ENCODE measurements at regions of chr13 and their contacts with region 1.

Region 1: DNA sequence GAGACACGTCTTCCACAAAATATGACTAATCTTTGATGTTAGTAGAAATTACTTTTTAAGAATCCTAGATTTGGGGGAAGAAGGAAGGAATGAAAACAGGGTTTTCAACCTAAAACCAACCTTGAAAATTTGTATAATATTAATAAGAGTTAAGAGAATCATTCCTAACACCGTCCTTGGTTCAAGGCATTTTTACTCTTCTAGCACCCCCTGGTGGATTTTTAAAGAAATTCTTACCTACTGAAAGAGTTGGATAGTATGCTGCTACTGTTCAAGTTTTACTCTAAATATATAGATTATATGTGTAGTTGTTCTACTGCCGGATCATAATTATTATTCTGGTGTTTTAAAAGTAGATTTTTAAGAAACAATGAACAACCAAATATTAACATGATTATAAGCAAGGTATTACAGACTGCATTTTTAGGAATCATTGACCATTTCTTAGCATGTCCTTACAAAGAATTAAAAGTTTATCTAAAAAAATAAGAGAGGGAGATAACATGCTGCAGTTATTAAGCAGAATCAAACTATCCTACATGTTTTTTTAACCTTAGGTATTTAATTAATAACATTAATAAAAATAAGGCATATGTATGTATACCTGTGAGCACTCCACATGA is 7.4 kb upstream of the SLITRK6 start:
- DNase-seq: no peak
- H3K4me3 Mint-ChIP-seq: no peak overlapping the region
- H3K27ac Mint-ChIP-seq: no peak overlapping the region
- H3K4me1 Mint-ChIP-seq: no peaks in the 10 kb centered on the region
- H3K27me3 Mint-ChIP-seq: no peaks in the 10 kb centered on the region

Region 2: DNA sequence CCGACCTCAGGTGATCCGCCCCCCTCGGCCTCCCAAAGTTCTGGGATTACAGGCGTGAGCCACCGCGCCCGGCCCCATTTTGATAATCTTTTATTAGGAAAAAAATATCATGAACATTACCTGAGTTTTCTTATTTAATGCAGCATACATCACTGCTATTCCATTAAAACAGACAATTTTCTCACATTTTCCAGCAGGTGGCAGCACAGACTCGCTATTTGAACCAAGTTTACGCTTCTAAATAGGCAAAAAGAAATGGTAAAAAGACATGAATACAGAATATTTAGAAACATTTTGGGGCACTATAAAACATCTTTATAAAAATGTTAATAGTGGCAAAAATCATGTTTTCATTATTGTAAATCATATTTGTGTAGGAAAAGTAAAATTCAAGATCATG is 910.5 kb before region 1 on chr13:
- intact Hi-C with region 1: loop called (anchors 1 kb)
- DNase-seq: no peak
- H3K4me3 Mint-ChIP-seq: no peak overlapping the region
- H3K27ac Mint-ChIP-seq: no peak overlapping the region
- H3K4me1 Mint-ChIP-seq: no peaks in the 10 kb centered on the region
- H3K27me3 Mint-ChIP-seq: no peaks in the 10 kb centered on the region

Region 3: DNA sequence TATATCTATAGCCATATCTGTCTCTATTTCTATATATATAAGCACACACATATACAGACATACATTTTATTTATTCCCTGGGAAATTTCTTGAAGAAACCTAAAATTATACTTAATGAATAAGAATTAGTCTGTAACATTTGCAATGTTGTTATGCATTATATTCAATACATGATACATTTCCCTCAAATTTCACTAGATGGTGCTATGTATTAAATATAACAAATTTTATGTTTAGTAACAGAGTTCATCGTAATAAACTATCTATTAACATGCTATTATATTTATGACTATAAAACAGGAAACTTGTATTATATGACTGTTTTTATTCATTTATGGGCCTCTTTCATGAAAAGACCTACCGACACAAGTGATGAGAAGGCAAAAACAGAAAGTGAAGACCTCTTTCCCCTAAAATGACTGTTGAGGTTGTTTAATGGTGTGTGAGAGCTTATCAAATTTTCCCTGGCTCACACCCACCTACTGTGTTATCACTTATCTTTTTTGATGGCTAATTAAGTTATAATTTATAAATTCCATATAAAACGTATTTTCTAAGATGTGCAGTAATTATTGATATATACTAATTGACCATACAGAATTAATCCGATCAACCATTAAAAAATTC is 889.3 kb before region 1 on chr13:
- intact Hi-C with region 1: loop called (anchors 1 kb)
- DNase-seq: no peak
- H3K4me3 Mint-ChIP-seq: no peak overlapping the region
- H3K27ac Mint-ChIP-seq: no peak overlapping the region
- H3K4me1 Mint-ChIP-seq: no peaks in the 10 kb centered on the region
- H3K27me3 Mint-ChIP-seq: no peaks in the 10 kb centered on the region

Measured in activated T-helper 1 cell treated with anti-CD3 and anti-CD28 coated beads, Interleukin-12 subunit alpha, Interleukin-12 subunit beta, Interleukin-2, Interleukin-4 antibody, amounts not matched to agents 30 ng/mL and 10 ng/mL and 1 ng/mL, durations not matched to agents 14 hours and 24 hours and 36 hours (primary cell).